ENCODE measurements at regions of chr6 and their contacts with region 1.

Region 1: GRCh38 chr6:89432875-89433251 is at the start of gene ANKRD6:
- DNase-seq: peak; percentile 85
- H3K4me3 Mint-ChIP-seq: peak within 1 kb of the TSS; percentile 69
- H3K27ac Mint-ChIP-seq: peak within 1 kb of the TSS; percentile 30
- H3K4me1 Mint-ChIP-seq: peaks cover 21% of the 10 kb centered on the region
- H3K27me3 Mint-ChIP-seq: peaks cover 1% of the 10 kb centered on the region
- total RNA-seq, gene ANKRD6: 3.1 to 4.0 TPM

Region 2: DNA sequence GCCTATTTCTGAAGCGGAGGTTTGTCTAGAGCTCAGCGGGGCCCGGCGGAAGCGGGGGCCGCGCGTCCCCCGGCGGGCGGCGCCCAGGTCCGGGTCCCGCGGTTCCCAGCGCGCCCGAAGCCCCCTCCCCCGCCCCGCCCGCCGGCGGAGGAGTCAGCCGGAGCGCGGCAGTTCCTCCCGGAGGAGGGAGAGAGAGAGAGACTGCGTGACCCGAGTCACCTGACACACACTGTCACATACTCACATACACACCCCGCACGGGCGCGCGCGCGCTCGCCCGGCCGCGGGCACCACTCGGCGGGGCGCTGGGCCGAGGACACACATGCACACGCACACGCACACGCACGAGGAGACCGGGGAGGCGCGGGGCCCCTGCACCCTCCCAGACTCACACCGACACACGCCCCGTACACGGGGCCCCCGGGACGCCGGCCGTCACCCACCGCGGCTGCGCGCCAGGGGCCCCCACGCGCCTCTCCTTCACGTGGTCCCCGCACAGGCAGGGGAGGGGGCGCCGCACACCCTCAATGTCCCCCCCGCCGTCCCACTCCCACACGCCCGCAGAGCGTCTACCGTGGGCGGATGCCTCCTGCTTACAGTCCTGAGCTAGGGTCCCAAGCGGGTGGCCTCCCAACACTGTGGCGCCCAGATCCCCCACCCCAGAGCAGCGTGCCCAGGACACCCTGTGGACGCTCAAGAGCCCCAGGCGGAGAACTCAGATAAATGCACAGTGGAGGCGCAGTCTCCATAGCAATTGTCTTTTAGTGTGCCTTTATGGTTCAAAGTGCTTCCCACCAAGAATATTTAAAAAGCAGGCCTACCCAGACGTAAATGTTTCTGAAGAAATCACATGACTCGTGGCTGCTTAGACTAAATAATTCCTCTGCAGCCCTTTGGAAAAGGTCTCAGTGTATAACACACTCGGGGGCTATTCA is 20.5 kb before region 1 on chr6 and contains the start of gene RRAGD:
- CTCF ChIA-PET with region 1: interaction called, 21 read pairs
- POLR2A ChIA-PET with region 1: no interaction called
- intact Hi-C with region 1: loop called (anchors 2 kb)
- DNase-seq: peak; percentile 72
- H3K4me3 Mint-ChIP-seq: peak within 1 kb of the TSS; percentile 83
- H3K27ac Mint-ChIP-seq: peak within 1 kb of the TSS; percentile 38
- H3K4me1 Mint-ChIP-seq: peaks cover 18% of the 10 kb centered on the region
- H3K27me3 Mint-ChIP-seq: peaks cover 2% of the 10 kb centered on the region
- total RNA-seq, gene RRAGD: 15.8 to 16.4 TPM

Region 3: GRCh38 chr6:89597988-89598692 is 165.3 kb after region 1 on chr6:
- CTCF ChIA-PET with region 1: interaction called, 4 read pairs
- POLR2A ChIA-PET with region 1: no interaction called
- intact Hi-C with region 1: loop called (anchors 5 kb)
- DNase-seq: no peak
- H3K4me3 Mint-ChIP-seq: no peak overlapping the region
- H3K27ac Mint-ChIP-seq: no peak overlapping the region
- H3K4me1 Mint-ChIP-seq: peaks cover 20% of the 10 kb centered on the region
- H3K27me3 Mint-ChIP-seq: no peaks in the 10 kb centered on the region

Region 4: DNA sequence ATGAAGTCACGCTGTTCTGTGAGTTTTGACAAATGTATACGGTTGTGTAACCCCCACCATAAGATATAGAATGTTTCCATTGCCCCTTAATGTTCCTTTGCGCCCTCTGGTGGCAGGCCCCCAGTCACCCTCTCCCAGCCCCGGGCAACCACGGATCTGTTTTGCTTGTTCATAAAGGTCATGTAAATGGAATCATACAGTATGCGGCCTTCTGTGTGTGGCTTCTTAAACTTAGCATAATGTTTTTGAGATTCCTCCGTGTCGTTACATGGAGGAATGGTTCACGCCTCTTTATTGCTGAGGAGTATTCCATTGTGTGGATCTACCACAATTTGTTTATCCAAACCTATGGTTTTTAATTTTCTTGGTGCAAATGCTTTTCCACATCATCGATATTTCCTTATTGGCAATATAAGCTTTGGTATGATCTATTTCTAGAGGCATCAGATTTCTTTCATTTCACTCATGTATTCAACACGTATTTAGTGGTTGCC is 177.3 kb after region 1 on chr6:
- CTCF ChIA-PET with region 1: interaction called, 91 read pairs
- POLR2A ChIA-PET with region 1: no interaction called
- intact Hi-C with region 1: loop called (anchors 1 kb)
- DNase-seq: peak; percentile 83
- H3K4me3 Mint-ChIP-seq: no peak overlapping the region
- H3K27ac Mint-ChIP-seq: no peak overlapping the region
- H3K4me1 Mint-ChIP-seq: no peaks in the 10 kb centered on the region
- H3K27me3 Mint-ChIP-seq: no peaks in the 10 kb centered on the region

Region 5: DNA sequence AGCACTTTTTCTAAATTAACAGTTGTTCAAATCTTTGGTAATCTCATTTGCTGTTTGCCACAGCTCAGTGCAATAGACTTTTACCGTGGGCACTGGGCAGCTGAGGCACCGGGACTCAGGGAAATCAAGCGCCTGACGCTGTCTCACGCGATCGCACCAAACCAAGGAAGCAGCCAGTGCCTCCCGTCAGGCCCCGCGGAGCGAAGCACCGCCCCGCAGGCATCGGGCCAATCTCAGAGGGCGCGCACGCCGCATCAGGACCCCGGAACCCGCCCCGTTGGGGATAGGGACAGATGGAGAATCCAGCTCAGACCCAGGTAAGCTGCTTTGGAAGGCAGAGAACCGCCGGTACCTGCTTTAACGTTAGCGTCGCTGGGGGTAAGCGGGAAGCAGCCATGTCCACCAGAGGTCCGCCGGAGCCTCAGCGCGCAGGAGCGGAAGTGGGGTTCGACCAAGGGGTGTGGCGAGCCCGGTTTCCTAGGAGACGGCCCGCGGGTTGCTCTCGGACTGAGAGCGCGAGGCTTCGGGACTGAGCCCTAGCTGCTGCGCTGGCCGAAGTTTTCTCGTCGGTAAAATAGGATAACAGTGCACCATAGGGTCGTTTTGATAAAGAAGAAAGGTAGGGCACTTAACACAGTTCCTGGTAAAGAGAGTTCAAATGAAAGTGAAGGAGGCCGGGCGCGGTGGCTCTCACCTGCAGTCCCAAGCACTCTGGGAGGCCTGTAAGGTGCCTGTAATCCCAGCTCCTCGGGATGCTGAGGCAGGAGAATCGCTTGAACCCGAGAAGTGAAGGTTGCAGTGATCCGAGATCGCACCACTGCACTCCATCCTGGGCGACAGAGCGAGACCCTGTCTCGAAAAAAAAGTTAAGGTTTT is 205.7 kb after region 1 on chr6 and contains the start of gene LYRM2:
- CTCF ChIA-PET with region 1: interaction called, 21 read pairs
- POLR2A ChIA-PET with region 1: interaction called, 5 read pairs
- intact Hi-C with region 1: loop called (anchors 2 kb)
- DNase-seq: peak; percentile 95
- H3K4me3 Mint-ChIP-seq: peak within 1 kb of the TSS; percentile 81
- H3K27ac Mint-ChIP-seq: peak within 1 kb of the TSS; percentile 96
- H3K4me1 Mint-ChIP-seq: peaks cover 32% of the 10 kb centered on the region
- H3K27me3 Mint-ChIP-seq: no peaks in the 10 kb centered on the region
- total RNA-seq, gene LYRM2: 25.5 to 26.4 TPM

Measured in activated CD4-positive, alpha-beta memory T cell treated with anti-CD3 and anti-CD28 coated beads for 36 hours (primary cell).